GM12878 (cell line): ENCODE measurements at regions of chr4 and their contacts with region 1.

Region 1: GRCh38 chr4:88514557-88515511 is 8.7 kb downstream of the PYURF start:
- DNase-seq: no peak
- ATAC-seq: no peak
- H3K4me3 ChIP-seq: no peak overlapping the region
- H3K27ac ChIP-seq: no peak overlapping the region
- H3K4me1 ChIP-seq: no peaks in the 10 kb centered on the region
- H3K27me3 ChIP-seq: no peaks in the 10 kb centered on the region
- CTCF ChIP-seq: no peak
- EP300 ChIP-seq: no peak
- POLR2A ChIP-seq: no peak
- RAD21 ChIP-seq: no peak

Region 2: GRCh38 chr4:87848622-87849351 is 666.0 kb before region 1 on chr4:
- CTCF ChIA-PET with region 1: interaction called, 6 read pairs
- POLR2A ChIA-PET with region 1: no interaction called
- RAD21 ChIA-PET with region 1: interaction called, 4 read pairs
- SMC1A ChIA-PET with region 1: interaction called, 3 read pairs
- in situ Hi-C with region 1: loop called (anchors 5 kb)
- intact Hi-C with region 1: loop called (anchors 5 kb)
- DNase-seq: no peak
- ATAC-seq: peak; percentile 98
- H3K4me3 ChIP-seq: no peak overlapping the region
- H3K27ac ChIP-seq: no peak overlapping the region
- H3K4me1 ChIP-seq: no peaks in the 10 kb centered on the region
- H3K27me3 ChIP-seq: no peaks in the 10 kb centered on the region; a peak in 1 of 4 replicates
- CTCF ChIP-seq: peak; percentile 49 to 64 (median 59); a peak in 5 of 6 replicates
- EP300 ChIP-seq: no peak
- POLR2A ChIP-seq: no peak
- RAD21 ChIP-seq: peak; percentile 57

Region 3: DNA sequence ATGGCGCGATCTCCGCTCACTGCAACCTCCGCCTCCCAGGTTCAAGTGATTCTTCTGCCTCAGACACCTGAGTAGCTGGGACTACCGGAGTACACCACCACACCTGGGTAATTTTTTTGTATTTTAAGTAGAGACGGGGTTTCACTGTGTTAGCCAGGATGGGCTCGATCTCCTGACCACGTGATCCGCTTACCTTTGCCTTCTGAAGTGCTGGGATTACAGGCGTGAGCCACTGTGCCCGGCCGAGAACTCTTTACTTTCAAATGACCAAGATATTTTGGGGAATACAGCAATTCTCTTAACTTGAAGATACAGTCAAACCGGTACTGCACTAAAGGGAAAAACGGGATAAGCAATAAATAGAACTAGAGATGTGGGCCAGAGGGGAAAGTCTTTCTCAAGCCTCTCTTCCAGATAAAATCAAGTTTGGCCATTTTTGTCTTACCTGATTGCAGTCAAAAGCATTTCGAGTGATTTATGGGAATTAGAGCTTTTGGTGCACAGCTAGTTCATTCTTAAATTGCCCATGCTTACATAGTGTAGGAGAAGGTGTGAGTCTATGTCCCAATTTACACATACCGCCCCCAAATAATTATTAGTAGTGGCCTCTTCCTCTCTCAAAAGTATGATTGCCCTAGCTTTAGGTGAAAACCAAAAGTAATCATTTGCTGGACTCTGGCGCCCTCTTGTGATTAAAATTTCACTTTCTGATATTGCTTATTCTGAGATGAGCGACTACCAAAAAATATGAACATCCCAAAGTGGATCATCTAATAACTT is 303.2 kb before region 1 on chr4:
- CTCF ChIA-PET with region 1: interaction called, 172 read pairs
- POLR2A ChIA-PET with region 1: interaction called, 4 read pairs
- RAD21 ChIA-PET with region 1: interaction called, 106 read pairs
- SMC1A ChIA-PET with region 1: interaction called, 112 read pairs
- in situ Hi-C with region 1: loop called (anchors 5 kb)
- intact Hi-C with region 1: no loop called
- DNase-seq: no peak
- ATAC-seq: peak; percentile 87
- H3K4me3 ChIP-seq: no peak overlapping the region
- H3K27ac ChIP-seq: no peak overlapping the region
- H3K4me1 ChIP-seq: no peaks in the 10 kb centered on the region
- H3K27me3 ChIP-seq: no peaks in the 10 kb centered on the region
- CTCF ChIP-seq: peak; percentile 43 to 77 (median 69)
- EP300 ChIP-seq: no peak
- POLR2A ChIP-seq: no peak
- RAD21 ChIP-seq: peak; percentile 95

Region 4: DNA sequence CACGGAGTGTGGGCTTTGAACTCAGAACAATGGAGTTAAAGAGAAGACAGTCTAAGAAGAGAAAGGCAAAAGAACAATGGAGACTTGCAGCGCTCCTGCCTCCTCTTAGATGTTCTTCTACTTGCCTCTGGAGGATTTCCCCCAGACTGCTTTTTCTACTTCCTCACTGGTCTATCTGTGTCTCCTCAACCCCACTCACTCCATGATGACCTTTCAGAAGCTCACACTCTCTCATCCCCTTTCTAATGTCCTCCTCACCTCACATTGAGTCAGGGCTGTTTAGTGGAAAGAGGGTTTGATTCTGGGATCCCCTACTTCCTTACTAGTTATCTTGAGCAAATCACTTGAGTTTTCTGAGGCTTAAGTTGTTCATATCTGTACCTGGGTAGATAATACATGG is 148.4 kb before region 1 on chr4:
- CTCF ChIA-PET with region 1: interaction called, 149 read pairs
- POLR2A ChIA-PET with region 1: no interaction called
- RAD21 ChIA-PET with region 1: interaction called, 75 read pairs
- SMC1A ChIA-PET with region 1: interaction called, 109 read pairs
- in situ Hi-C with region 1: loop called (anchors 5 kb)
- intact Hi-C with region 1: loop called (anchors 1 kb)
- DNase-seq: no peak
- ATAC-seq: peak; percentile 36
- H3K4me3 ChIP-seq: no peak overlapping the region
- H3K27ac ChIP-seq: no peak overlapping the region
- H3K4me1 ChIP-seq: no peaks in the 10 kb centered on the region
- H3K27me3 ChIP-seq: no peaks in the 10 kb centered on the region
- CTCF ChIP-seq: no peak
- EP300 ChIP-seq: no peak
- POLR2A ChIP-seq: no peak
- RAD21 ChIP-seq: no peak

Region 5: DNA sequence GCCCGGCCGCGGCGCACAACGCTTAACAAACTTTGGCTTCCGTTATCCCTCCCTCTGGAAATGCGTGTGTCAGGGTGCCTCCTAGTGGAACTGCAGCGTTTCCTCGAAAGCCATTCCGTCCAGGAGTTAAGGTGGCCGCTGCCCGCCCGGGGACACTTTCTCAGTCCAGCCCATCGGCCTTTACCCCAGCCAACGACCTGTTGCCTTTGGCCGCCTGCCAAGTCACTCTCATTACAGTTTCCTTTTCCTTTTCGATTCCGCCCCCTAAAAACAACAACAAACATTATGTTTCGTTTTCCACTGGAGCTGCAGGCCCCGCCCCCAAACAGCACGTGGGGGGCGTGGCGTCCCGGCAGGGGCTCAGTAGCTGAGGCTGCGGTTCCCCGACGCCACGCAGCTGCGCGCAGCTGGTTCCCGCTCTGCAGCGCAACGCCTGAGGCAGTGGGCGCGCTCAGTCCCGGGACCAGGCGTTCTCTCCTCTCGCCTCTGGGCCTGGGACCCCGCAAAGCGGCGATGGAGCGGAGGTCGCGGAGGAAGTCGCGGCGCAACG is 58.0 kb before region 1 on chr4 and contains the start of gene HERC5:
- CTCF ChIA-PET with region 1: interaction called, 4 read pairs
- POLR2A ChIA-PET with region 1: no interaction called
- RAD21 ChIA-PET with region 1: interaction called, 21 read pairs
- SMC1A ChIA-PET with region 1: interaction called, 10 read pairs
- in situ Hi-C with region 1: no loop called
- intact Hi-C with region 1: no loop called
- DNase-seq: peak; percentile 87
- ATAC-seq: peak; percentile 91
- H3K4me3 ChIP-seq: peak within 1 kb of the TSS; percentile 78
- H3K27ac ChIP-seq: peak within 1 kb of the TSS; percentile 97
- H3K4me1 ChIP-seq: peaks cover 5% of the 10 kb centered on the region
- H3K27me3 ChIP-seq: no peaks in the 10 kb centered on the region
- CTCF ChIP-seq: peak in 2 of 3 experiments; percentile 33 to 63; a peak in 3 of 6 replicates
- EP300 ChIP-seq: no peak
- POLR2A ChIP-seq: peak; percentile 89
- RAD21 ChIP-seq: peak; percentile 34; the same call in 1 of the 2 replicates
- polyA plus RNA-seq, gene HERC5: 12.5 to 18.6 TPM

Region 6: GRCh38 chr4:88503344-88503743 is 11.5 kb before region 1 on chr4:
- CTCF ChIA-PET with region 1: interaction called, 16 read pairs
- POLR2A ChIA-PET with region 1: interaction called, 3 read pairs
- RAD21 ChIA-PET with region 1: interaction called, 3 read pairs
- SMC1A ChIA-PET with region 1: interaction called, 9 read pairs
- in situ Hi-C with region 1: no loop called
- intact Hi-C with region 1: no loop called
- DNase-seq: no peak
- ATAC-seq: no peak
- H3K4me3 ChIP-seq: no peak overlapping the region
- H3K27ac ChIP-seq: no peak overlapping the region
- H3K4me1 ChIP-seq: no peaks in the 10 kb centered on the region
- H3K27me3 ChIP-seq: no peaks in the 10 kb centered on the region
- CTCF ChIP-seq: no peak
- EP300 ChIP-seq: no peak
- POLR2A ChIP-seq: no peak
- RAD21 ChIP-seq: no peak